Activated CD4-positive, alpha-beta T cell treated with anti-CD3 and anti-CD28 coated beads for 36 hours (primary cell): ENCODE measurements at regions of chr20 and their contacts with region 1.

Region 1: GRCh38 chr20:3795511-3796468 is at the start of gene CDC25B:
- DNase-seq: peak; percentile 95
- ATAC-seq: peak; percentile 82
- H3K4me3 Mint-ChIP-seq: peak within 1 kb of the TSS; percentile 93
- H3K27ac Mint-ChIP-seq: peak within 1 kb of the TSS; percentile 98
- H3K4me1 Mint-ChIP-seq: peaks cover 47% of the 10 kb centered on the region
- H3K27me3 Mint-ChIP-seq: no peaks in the 10 kb centered on the region
- total RNA-seq, gene CDC25B: 79.8 to 96.2 TPM

Region 2: GRCh38 chr20:3734111-3734843 is 61.5 kb before region 1 on chr20:
- CTCF ChIA-PET with region 1: no interaction called
- POLR2A ChIA-PET with region 1: no interaction called
- intact Hi-C with region 1: no loop called
- DNase-seq: no peak
- ATAC-seq: no peak
- H3K4me3 Mint-ChIP-seq: no peak overlapping the region
- H3K27ac Mint-ChIP-seq: no peak overlapping the region
- H3K4me1 Mint-ChIP-seq: no peaks in the 10 kb centered on the region
- H3K27me3 Mint-ChIP-seq: peaks cover 24% of the 10 kb centered on the region

Region 3: DNA sequence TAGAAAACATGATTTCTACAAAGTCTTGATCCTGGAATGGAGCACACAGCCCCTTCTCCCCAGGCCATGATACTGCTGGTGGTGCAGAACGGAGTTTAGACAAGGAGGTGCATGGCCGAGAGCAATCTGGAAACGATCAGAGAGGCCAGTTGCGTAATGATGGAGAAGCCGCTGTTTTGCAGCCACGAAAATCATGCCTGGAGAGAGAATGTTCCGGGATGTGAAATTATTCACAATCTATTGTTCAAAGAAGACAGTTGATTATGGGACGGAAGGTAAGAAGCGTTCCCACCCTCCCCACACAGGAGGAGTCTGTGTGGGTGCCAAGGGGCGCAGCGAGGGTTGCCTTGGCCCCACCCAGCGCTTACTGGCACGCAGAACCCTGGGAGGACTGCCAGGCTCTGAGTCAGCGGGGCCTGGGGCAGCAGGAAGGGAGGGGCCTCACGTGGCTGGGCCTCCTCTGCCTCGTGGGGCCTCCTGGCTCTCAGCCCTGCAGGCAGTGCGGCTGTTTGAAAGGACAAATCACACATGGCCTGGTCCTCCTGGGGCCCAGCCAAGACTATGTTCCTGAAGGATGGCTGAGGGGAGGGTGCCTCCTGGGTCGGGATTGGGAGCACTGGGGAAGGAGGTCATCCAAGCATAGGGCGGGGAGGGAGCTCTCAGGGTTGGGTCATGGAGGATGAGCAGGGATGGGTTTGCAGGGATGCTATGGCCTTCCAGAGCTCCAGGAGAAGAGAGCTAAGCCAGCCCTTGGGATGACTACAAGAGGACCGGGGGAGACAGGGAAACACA is 15.9 kb after region 1 on chr20:
- CTCF ChIA-PET with region 1: interaction called, 12 read pairs
- POLR2A ChIA-PET with region 1: interaction called, 7 read pairs
- intact Hi-C with region 1: loop called (anchors 1 kb)
- DNase-seq: peak; percentile 97
- ATAC-seq: peak; percentile 92
- H3K4me3 Mint-ChIP-seq: peak overlapping the region; percentile 78
- H3K27ac Mint-ChIP-seq: peak overlapping the region; percentile 96
- H3K4me1 Mint-ChIP-seq: peaks cover 78% of the 10 kb centered on the region
- H3K27me3 Mint-ChIP-seq: no peaks in the 10 kb centered on the region

Region 4: DNA sequence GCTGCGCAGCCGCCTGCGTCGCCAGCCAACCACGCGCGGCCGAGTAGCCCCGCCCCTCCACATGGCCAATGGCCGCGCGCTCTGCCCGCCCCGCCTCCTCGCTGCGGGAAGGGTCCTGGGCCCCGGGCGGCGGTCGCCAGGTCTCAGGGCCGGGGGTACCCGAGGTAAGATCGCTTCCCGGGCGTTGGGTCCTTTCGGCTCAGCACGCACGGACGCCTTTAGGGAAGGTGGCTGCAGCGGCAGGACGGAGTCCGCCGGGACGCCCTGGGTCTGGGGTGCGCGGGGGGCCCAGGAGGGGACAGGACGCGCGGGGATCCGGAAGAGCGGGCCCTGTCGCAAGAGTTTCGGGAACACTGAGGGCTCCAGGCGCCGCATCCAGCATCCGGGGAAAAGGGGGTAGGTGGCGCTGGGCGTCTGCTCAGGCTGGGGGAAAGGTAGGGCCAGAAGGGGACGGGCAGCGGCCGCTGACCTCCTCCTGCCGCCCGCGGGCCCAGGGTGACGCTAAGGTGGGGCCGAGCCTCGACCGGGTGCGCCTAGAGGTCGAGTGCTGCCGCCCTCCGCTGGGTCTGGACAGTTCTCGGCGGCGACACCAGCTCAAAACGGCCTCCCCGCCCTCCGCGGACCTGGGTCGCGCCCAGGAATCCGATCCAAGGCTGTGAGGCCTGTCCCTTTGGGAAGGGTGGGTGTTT is 51.1 kb after region 1 on chr20 and contains the start of gene MAVS:
- CTCF ChIA-PET with region 1: interaction called, 3 read pairs
- POLR2A ChIA-PET with region 1: no interaction called
- intact Hi-C with region 1: loop called (anchors 1 to 2 kb)
- DNase-seq: peak; percentile 91
- ATAC-seq: peak; percentile 98
- H3K4me3 Mint-ChIP-seq: peak within 1 kb of the TSS; percentile 88
- H3K27ac Mint-ChIP-seq: peak within 1 kb of the TSS; percentile 84
- H3K4me1 Mint-ChIP-seq: peaks cover 22% of the 10 kb centered on the region
- H3K27me3 Mint-ChIP-seq: no peaks in the 10 kb centered on the region
- total RNA-seq, gene MAVS: 23.2 to 25.9 TPM